Posterior vena cava (tissue), 2 donors: ENCODE measurements at regions of chr7 and their contacts with region 1.

Region 1: DNA sequence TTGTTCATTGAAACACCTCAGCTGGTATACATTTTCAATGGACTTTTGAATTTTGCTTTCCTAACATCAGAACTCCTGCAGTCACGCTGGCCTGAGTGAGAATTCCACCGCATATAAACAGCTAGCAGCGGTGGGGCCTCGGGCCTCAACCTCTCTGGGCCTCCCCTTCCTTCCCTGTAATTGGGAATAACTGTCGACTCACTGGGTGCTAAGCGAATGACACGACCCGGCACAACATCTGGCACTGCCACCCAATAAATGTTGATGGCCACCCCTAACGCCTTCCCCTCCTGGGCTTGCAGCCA is 672 bp downstream of the RCC1L start:
- DNase-seq: no peak

Region 2: DNA sequence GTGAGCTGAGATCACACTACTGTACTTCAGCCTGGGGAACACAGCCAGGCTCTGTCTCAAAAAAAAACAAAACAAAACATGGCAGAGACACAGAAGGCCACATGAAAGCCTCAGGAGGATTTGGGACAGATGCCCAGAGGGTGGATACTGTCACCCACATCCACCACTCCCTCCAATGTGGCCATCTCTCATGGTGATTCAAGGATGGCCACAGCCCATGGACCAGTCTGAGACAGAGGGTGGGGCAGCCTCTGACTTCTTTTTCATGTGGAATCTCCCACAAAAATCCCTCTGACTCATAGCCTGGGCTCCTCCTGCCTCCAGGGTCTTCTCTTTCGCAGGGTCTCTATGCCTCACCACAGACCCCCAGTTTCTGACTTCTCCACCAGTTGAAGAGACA is 474.4 kb before region 1 on chr7:
- intact Hi-C with region 1: no loop called
- DNase-seq: no peak

Region 3: GRCh38 chr7:75058406-75058805 is 14.5 kb before region 1 on chr7:
- intact Hi-C with region 1: loop called in 1 of 2 experiments (anchors 2 kb)
- DNase-seq: no peak